Adrenal gland (tissue), 19 donors: ENCODE measurements at regions of chr1 and their contacts with region 1.

Region 1: GRCh38 chr1:16958503-16958902 is 21.9 kb downstream of the MFAP2 start:
- DNase-seq: no peak
- H3K4me3 ChIP-seq: no peak overlapping the region
- H3K27ac ChIP-seq: no peak overlapping the region
- H3K4me1 ChIP-seq: peaks cover 0 to 12% of the 10 kb centered on the region in 2 donors
- H3K27me3 ChIP-seq: no peaks in the 10 kb centered on the region
- CTCF ChIP-seq: no peak
- POLR2A ChIP-seq: no peak

Region 2: DNA sequence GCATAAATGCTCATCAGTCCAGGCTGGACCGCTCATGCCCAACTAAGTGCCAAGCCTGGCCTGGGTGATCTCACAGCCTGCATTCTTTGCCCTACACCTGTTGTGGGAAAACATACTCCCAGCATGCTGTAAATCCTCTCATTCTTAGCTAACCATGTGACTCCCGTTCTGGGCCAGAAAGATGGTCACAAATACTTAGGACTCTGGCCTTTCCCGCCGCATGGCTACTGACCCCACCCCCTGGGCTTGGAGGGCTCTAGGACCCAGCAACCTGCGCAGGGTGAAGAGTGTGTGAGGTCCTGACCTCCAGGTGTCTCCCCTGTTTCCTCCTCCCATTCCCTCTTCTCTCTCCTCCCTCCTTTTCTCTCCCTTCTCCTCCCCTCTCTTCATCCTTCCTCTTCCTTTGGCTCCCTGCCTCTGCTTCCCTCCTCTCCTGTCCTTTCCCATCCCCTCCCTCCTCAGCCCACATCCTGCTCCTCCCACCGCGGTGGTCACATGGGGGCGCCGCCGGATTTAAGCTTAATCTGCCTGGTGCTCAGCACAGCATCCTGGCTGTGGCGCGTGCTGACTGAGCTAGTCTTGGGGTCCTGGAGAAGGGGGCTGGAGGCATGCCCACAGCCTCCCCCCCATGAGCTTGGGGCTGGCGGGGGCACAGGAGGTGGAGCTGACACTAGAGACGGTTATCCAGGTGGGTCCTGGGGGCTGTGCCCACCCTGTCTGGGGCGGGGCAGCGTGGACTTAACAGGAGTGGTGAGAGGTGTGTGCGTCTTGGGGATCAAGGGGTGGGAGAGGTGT is 36.9 kb before region 1 on chr1 and contains the start of gene CROCC:
- intact Hi-C with region 1: no loop called
- DNase-seq: no peak
- H3K4me3 ChIP-seq: no peak within 1 kb of the TSS
- H3K27ac ChIP-seq: no peak within 1 kb of the TSS
- H3K4me1 ChIP-seq: no peaks in the 10 kb centered on the region
- H3K27me3 ChIP-seq: no peaks in the 10 kb centered on the region
- CTCF ChIP-seq: no peak
- POLR2A ChIP-seq: no peak
- total RNA-seq, gene CROCC: 5.6 to 34.0 (median 18.0) TPM

Region 3: DNA sequence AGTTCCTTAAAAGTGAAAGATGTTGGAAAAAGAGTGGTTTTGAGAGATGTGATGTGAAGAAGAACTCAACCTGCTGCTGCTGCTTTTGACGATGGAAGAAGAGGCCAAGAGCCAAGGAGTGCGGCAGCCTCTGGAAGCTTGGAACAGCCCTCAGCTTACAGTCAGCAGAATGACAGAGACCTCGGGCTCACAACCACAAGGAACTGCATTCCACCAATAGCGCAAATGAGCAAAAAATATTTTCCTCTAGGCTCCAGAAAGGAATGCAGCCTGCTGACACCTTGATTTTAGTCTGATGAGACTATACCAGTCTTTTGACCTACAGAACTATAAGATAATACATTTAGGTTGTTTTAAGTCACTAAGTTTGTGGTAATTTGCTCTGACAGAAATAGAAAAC is 85.2 kb after region 1 on chr1:
- intact Hi-C with region 1: loop called in 1 of 2 experiments (anchors 5 kb)
- DNase-seq: no peak
- H3K4me3 ChIP-seq: no peak overlapping the region
- H3K27ac ChIP-seq: no peak overlapping the region
- H3K4me1 ChIP-seq: peaks cover 8 to 30% of the 10 kb centered on the region in 2 donors
- H3K27me3 ChIP-seq: no peaks in the 10 kb centered on the region
- CTCF ChIP-seq: no peak
- POLR2A ChIP-seq: no peak

Region 4: DNA sequence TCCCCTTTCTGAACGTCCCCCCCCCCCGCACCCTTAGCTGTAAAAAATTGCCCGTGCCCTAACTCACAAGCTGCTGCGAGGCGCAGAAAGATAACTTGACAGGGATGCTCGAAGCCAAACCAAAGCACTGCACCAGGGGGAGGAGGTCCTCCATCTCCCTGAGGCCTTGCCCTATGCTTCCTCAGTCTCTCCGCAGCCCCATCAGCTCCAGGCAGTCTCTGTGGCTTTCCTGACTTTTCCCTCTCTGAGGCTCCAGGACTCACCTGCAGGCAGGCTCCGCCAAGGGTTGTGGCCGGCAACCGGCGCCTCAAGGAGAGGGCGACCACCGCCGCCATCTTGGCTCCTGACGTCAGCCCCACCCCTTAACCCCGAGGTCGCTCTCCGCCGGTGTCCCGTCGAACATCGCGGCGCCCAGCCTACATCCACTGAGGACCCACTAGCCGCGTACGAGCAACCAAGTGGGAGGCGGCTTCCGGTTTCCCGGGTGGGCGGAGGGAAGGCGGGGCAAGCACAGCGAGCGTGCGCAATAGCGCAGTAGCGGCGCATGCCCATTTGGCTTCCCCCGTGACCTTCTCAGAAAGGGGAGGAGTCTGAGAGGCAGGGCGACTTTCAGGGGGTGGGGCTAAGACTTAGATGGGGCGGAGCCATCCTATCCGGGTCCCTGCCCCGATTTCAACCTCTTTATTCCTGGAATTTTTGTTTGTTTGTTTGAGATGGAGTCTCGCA is 95.3 kb after region 1 on chr1 and contains the start of gene SDHB:
- intact Hi-C with region 1: loop called in 1 of 2 experiments (anchors 5 kb)
- DNase-seq: peak; percentile 98 to 99 (median 99)
- H3K4me3 ChIP-seq: peak within 1 kb of the TSS; percentile 56 to 79 (median 62)
- H3K27ac ChIP-seq: peak within 1 kb of the TSS in 4 of 5 donors; percentile 74 to 90 (median 86)
- H3K4me1 ChIP-seq: peaks cover 11 to 14% of the 10 kb centered on the region in 2 donors
- H3K27me3 ChIP-seq: no peaks in the 10 kb centered on the region
- CTCF ChIP-seq: no peak
- POLR2A ChIP-seq: peak; percentile 89 to 99
- total RNA-seq, gene SDHB: 108 to 243 (median 158) TPM

Region 5: DNA sequence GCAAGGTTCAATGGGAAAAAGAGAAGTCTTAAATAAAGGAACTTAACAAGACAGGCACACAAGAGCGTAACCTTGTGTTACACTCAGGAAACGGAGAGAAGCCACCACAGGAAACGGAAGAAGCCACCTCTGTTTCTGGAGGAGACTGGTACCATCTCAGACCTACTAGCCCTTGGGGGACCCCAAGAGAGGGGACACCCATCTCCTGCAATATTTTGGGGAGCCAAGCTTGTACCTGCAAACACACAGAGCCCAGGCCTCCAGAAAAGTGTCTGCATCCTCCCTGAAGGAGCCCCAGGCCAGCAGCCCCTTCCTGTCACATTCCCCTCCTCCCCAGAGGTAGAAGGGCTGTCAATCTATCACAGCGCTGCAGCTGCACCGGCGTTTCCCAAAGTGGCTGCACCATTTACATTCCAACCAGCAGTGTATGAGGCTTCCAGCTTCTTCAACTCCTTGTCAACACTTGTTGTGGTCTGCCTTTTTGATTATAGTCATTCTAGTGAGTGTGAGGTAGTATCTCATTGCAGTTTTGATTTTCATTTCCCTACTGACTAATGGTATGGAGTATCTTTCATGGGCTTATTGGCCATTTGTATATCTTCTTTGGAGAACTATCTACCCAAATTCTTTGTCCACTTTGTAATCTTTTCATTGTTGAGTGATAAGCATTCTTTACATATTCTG is 223.4 kb after region 1 on chr1:
- intact Hi-C with region 1: no loop called
- DNase-seq: no peak
- H3K4me3 ChIP-seq: no peak overlapping the region
- H3K27ac ChIP-seq: no peak overlapping the region
- H3K4me1 ChIP-seq: no peaks in the 10 kb centered on the region
- H3K27me3 ChIP-seq: no peaks in the 10 kb centered on the region
- CTCF ChIP-seq: no peak
- POLR2A ChIP-seq: no peak